ENCODE measurements at regions of chr4 and their contacts with region 1.

Region 1: DNA sequence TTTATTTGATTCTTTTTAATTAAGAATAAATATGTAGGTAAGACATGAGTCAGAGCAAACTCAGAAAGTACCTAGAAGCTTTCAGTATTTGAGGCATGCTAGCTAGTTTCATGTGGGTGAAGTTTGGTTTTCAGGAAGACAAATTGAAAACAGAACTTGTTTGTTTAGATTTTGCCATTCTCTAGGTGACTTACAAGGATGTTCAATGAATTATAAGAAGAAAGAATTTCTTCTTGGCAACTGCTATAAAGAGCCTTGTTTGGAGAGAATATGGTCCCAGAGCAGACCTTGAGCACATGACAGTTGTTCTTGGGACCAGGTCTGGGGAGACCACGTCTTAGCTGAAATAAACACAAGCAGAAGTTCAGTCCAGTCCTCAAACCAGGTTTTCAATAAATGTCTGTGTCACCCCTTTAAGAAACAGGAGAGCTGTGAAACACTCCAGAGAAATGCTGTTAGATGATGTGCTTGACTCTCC is 38.0 kb upstream of the IL21 start:
- DNase-seq: peak; percentile 29
- CTCF ChIP-seq: no peak

Region 2: GRCh38 chr4:122500852-122501501 is 157.9 kb before region 1 on chr4:
- CTCF ChIA-PET with region 1: no interaction called
- POLR2A ChIA-PET with region 1: no interaction called
- DNase-seq: no peak
- CTCF ChIP-seq: no peak

Region 3: DNA sequence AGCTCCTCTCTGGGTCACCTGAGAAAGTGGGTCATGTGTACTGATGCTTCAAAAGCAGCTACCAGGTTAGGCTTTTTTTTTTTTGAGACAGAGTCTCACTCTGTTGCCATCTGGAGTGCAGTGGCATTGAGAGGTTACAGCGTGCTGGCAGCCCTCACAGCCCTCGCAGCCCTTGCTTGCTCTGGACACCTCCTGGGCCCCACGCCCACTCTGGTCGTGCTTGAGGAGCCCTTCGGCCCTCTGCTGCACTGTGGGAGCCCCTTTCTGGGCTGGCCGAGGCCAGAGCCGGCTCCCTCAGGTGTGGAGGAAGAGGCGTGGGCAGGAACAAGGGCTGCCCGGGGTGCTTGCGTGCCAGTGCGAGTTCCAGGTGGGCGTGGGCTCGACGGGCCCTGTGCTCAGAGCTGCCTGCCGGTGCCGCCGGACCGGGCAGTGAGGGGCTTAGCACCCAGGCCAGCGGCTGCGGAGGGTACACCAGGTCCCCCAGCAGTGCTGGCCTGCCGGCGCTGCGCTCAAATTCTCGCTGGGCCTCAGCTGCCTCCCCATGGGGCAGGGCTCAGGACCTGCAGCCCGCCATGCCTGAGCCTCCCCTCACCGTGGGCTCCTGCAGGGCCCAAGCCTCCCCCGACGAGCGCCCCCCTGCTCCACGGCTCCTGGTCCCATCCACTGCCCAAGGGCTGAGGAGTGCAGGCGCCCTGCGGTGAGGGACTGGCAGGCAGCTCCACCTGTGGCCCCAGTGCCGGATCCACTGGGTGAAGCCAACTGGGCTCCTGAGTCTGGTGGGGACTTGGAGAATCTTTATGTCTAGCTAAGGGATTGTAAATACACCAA is 11.3 kb after region 1 on chr4:
- CTCF ChIA-PET with region 1: interaction called, 12 read pairs
- POLR2A ChIA-PET with region 1: no interaction called
- DNase-seq: no peak
- CTCF ChIP-seq: no peak

Measured in GM10248 (cell line).